ENCODE measurements at regions of chr15 and their contacts with region 1.

Region 1: GRCh38 chr15:65054333-65055200 is 9.4 kb downstream of the SLC51B start:
- DNase-seq: peak; percentile 77 to 90 (median 90)
- ATAC-seq: peak; percentile 75 to 78
- H3K4me3 ChIP-seq: no peak overlapping the region
- H3K27ac ChIP-seq: peak overlapping the region; percentile 83
- H3K4me1 ChIP-seq: peaks cover 21% of the 10 kb centered on the region
- H3K27me3 ChIP-seq: no peaks in the 10 kb centered on the region

Region 2: DNA sequence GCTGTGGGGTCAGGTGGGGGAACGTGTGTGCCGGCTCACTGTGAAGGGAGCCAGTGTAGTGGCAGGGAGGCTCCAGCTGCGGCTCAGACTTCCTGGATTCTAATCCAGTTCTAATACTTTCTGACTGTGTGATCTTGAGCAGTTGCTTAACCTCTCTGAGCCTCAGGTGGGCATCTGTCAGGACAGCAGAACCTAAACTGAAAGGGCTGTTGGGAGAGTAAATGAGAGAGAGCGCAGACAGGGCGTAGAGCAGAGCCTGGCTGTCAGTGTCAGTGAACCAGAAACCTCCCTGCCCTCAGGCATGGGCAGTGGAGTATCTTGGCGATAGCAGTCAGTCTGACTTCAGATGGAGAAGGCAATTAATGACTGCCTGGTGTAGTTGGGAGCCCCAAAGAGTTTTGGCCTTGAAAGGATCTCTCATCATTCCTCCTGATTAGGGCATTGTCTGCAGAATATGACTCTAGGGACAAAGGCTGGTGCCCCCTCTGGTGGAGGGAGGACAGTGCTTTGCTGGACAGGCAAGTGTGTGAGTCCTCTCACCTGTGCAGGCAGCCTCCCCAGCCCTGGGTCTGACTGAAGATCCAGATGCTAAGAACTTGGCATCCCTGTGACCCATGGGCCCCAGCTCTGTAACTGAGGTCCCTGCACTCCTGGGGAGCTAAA is 31.6 kb after region 1 on chr15:
- intact Hi-C with region 1: loop called in 2 of 4 experiments (anchors 5 kb)
- DNase-seq: peak in 1 of 3 donors; percentile 60
- ATAC-seq: no peak
- H3K4me3 ChIP-seq: no peak overlapping the region
- H3K27ac ChIP-seq: peak overlapping the region; percentile 67
- H3K4me1 ChIP-seq: peaks cover 24% of the 10 kb centered on the region
- H3K27me3 ChIP-seq: no peaks in the 10 kb centered on the region

Region 3: DNA sequence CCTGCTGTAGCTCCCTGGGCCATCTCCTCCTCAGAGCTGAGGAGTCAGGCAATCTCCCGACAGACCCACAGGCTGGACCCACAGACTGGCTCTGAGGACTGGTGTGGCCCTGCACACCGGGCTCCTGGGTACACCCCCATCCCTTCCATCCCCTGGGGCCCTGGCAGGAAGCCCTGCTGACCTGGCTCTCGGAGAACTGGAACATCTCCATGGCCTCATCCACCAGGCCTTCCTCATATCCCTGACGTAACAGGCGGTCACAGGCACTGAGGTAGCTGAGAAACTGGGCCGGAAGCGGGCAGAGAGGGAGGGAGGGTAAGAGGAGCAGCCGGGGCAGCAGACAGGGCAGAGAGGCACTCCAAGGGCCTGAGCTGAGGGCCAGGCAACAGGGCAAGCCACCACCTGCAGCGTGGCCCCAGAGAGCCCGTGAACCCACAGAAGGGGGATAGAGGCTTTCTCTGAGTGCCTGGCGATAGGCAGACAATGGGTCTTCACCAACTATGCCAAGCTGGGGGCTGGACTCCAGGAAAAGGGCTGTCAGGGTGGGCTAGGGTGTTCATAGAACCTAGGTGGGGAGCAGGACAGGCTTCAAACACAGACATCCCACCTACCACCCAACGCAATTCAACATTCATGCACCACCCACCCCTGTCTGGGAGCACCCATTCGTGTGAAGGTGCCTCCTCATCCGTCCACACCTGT is 39.9 kb after region 1 on chr15:
- intact Hi-C with region 1: loop called in 3 of 4 experiments (anchors 5 kb)
- DNase-seq: peak in 2 of 3 donors; percentile 43 to 48
- ATAC-seq: peak; percentile 24 to 57
- H3K4me3 ChIP-seq: no peak overlapping the region
- H3K27ac ChIP-seq: no peak overlapping the region
- H3K4me1 ChIP-seq: peaks cover 15% of the 10 kb centered on the region
- H3K27me3 ChIP-seq: no peaks in the 10 kb centered on the region

Region 4: DNA sequence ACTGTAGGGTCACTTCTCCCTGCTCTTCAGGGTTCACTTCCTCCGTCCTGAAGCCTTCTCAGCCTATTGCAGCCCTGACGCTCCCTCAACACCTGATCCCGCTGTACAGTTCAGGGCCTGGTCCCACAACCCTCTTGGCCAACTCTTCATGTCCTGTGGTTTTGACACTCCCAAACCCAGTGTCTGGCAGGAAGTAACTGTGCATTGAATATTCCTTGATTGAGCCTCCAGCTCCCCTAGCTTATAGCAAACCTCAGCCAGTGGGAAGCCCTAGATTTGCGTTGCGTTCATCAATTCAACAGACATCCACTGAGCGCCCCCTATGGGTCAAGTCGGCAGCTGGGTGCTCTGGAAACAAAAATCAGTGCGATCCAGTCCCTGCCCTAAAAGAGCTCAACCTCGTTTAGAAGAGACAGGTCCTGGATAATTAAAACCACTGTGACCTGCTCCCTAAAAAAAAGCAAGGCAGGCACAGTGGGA is 46.9 kb after region 1 on chr15:
- intact Hi-C with region 1: loop called in 2 of 4 experiments (anchors 2 to 5 kb)
- DNase-seq: peak; percentile 80 to 92 (median 87)
- ATAC-seq: peak; percentile 49 to 53
- H3K4me3 ChIP-seq: no peak overlapping the region
- H3K27ac ChIP-seq: no peak overlapping the region
- H3K4me1 ChIP-seq: no peaks in the 10 kb centered on the region
- H3K27me3 ChIP-seq: no peaks in the 10 kb centered on the region

Region 5: GRCh38 chr15:65824031-65824743 is 769.6 kb after region 1 on chr15:
- intact Hi-C with region 1: no loop called
- DNase-seq: peak in 1 of 3 donors; percentile 26
- ATAC-seq: peak; percentile 91 to 92
- H3K4me3 ChIP-seq: no peak overlapping the region
- H3K27ac ChIP-seq: no peak overlapping the region
- H3K4me1 ChIP-seq: no peaks in the 10 kb centered on the region
- H3K27me3 ChIP-seq: no peaks in the 10 kb centered on the region